PC-3 (cell line): ENCODE measurements at regions of chr3 and their contacts with region 1.

Region 1: DNA sequence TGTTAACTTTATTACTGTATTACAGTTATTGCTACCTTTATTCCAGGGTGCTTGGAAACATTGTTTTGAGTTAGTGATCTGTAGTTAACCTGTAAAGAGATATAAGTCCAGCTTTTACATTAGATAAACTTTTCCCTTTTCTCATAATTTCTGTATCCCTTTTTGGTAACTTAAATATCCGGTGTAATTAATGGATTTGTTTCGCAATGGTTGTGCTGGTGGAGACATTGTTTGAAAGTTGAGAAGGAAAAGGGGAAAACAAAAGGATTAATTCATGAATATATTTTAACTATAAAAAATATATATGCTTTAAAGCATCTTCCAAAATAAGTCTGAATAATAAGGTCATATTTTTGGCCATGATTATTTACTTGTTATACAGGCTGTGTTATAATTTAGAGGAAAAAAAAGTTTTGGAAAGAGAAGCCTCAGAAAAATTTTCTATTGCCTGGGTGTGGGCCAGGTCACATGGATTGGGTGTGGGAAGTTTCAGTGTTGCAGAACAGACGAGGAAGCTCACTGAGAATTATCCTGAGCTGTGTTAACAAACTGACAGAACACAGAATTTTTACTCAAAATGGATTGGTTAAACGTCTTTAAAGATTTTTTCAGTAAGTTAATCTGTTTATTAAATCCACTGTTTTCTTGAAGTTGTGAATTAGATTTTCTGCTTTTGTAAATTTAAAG is 27.7 kb upstream of the IL20RB start:
- DNase-seq: no peak
- ATAC-seq: no peak
- H3K4me3 ChIP-seq: no peak overlapping the region
- H3K27ac ChIP-seq: peak overlapping the region; percentile 73
- H3K4me1 ChIP-seq: peaks cover 16% of the 10 kb centered on the region
- H3K27me3 ChIP-seq: no peaks in the 10 kb centered on the region
- CTCF ChIP-seq: no peak

Region 2: DNA sequence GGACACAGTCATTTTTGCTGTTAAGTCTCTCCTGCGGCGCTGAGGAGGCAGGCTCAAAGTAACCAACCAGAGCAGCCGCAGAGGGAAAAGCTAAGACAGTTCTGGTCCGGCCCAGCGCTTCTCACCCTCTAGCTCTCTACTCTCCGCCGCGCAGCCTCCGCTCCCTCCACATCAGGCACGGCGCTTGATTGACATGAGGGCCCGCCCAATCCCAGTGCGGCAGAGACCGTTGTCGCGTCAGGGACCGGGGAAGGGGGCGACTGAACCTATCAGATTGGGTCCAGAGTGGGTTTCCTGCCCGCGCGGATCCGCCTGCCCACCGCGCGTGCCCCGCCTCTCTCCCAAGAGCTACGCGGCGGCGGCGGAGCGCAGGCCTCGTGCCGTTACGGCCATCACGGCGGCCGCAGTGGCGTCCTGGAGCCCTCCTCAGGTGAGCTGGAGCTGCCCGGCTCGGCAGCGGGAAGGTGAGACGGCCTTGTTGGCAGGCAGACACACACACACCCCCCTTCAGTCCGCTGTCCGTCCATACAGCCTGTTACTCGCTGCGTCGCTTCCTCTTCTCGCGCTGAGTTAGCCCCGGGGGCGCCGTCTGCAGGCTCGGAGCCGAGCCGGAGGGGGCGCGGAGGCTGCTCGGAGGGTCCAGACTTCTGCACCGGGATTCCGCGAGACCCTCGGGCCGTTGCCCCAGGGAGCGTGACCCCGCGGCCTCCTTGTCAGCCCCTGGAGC is 68.1 kb before region 1 on chr3 and contains the start of gene NCK1:
- CTCF ChIA-PET with region 1: no interaction called
- POLR2A ChIA-PET with region 1: no interaction called
- intact Hi-C with region 1: loop called (anchors 10 kb)
- DNase-seq: peak; percentile 93
- ATAC-seq: peak; percentile 98
- H3K4me3 ChIP-seq: peak within 1 kb of the TSS; percentile 94
- H3K27ac ChIP-seq: peak within 1 kb of the TSS; percentile 76
- H3K4me1 ChIP-seq: peaks cover 14% of the 10 kb centered on the region
- H3K27me3 ChIP-seq: no peaks in the 10 kb centered on the region
- CTCF ChIP-seq: 0 out of 2 replicates have a peak, but pooled peaks have one; percentile 12
- total RNA-seq, gene NCK1: 15.3 and 16.5 TPM in 2 replicates

Region 3: GRCh38 chr3:136893848-136894443 is 36.2 kb before region 1 on chr3:
- CTCF ChIA-PET with region 1: no interaction called
- POLR2A ChIA-PET with region 1: no interaction called
- intact Hi-C with region 1: loop called (anchors 5 kb)
- DNase-seq: peak; percentile 75
- ATAC-seq: peak; percentile 88
- H3K4me3 ChIP-seq: peak overlapping the region; percentile 6; the same call in 1 of the 2 replicates
- H3K27ac ChIP-seq: peak overlapping the region; percentile 40
- H3K4me1 ChIP-seq: peaks cover 13% of the 10 kb centered on the region
- H3K27me3 ChIP-seq: no peaks in the 10 kb centered on the region
- CTCF ChIP-seq: no peak

Region 4: DNA sequence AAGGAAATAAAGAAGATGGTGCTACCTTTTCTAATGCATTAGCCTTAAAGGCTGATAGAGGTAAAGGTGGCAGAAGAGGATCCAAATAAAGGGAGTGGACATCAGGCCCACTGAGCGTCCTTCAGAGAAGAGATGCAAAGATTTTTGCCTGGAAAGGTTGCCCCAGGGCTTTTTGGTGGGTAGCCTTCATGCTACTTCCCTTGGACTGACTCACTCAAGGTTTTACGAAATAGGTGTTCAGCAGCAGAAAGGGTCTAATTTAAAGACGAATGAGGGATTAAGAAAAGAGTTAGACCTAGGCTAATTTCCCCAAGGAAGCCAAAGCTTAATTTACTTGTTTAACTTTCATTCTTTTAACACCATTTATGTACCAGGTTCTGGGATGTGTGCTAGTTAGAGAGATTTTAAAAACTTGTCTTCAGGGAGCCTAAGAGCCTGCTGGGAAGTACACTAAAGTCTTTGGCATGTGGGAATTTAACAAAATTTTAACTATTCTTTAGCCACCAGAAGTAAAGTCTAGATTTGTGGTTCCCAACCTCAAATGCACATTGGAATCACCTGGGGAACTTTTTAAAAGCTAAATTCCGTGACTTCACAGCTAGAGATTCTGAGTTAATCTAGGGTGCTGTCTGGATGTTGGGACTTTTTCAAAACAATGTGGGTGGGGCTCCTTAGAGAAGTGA is 30.9 kb after region 1 on chr3:
- CTCF ChIA-PET with region 1: no interaction called
- POLR2A ChIA-PET with region 1: no interaction called
- intact Hi-C with region 1: no loop called
- DNase-seq: peak; percentile 77
- ATAC-seq: 0 out of 2 replicates have a peak, but pooled peaks have one; percentile 43
- H3K4me3 ChIP-seq: no peak overlapping the region
- H3K27ac ChIP-seq: peak overlapping the region; percentile 64
- H3K4me1 ChIP-seq: peaks cover 21% of the 10 kb centered on the region
- H3K27me3 ChIP-seq: no peaks in the 10 kb centered on the region
- CTCF ChIP-seq: no peak